ENCODE measurements at regions of chr11 and their contacts with region 1.

Region 1: GRCh38 chr11:81942646-81943045 is 791.0 kb downstream of the FAM181B start:
- DNase-seq: no peak
- ATAC-seq: no peak
- H3K4me3 ChIP-seq: no peak overlapping the region
- H3K4me3 Mint-ChIP-seq: no peak overlapping the region
- H3K27ac ChIP-seq: no peak overlapping the region
- H3K27ac Mint-ChIP-seq: no peak overlapping the region
- H3K4me1 ChIP-seq: no peaks in the 10 kb centered on the region
- H3K4me1 Mint-ChIP-seq: no peaks in the 10 kb centered on the region
- H3K27me3 ChIP-seq: no peaks in the 10 kb centered on the region
- H3K27me3 Mint-ChIP-seq: no peaks in the 10 kb centered on the region

Region 2: DNA sequence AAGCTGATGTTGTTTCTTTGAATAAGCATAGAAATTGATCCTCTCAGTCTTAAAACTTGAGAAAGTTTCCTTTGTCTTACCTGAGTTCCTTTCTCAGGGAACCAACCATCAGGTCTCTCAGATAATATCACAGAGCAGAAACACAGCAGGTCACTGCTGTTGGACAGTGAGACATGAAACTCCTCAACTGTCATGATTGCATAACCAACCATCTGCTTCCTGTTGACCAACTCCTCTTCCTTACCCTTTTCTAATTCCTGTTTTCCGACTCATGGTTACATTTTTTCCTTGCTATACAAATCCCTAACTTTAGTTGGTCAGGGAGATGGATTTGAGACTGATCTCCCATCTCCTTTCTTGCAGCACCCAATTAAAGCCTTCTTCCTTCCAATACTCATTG is 54.3 kb before region 1 on chr11:
- CTCF ChIA-PET with region 1: no interaction called
- POLR2A ChIA-PET with region 1: interaction called in 1 of 2 experiments, 13 read pairs
- DNase-seq: no peak
- ATAC-seq: no peak
- H3K4me3 ChIP-seq: no peak overlapping the region
- H3K4me3 Mint-ChIP-seq: no peak overlapping the region
- H3K27ac ChIP-seq: no peak overlapping the region
- H3K27ac Mint-ChIP-seq: no peak overlapping the region
- H3K4me1 ChIP-seq: no peaks in the 10 kb centered on the region
- H3K4me1 Mint-ChIP-seq: no peaks in the 10 kb centered on the region
- H3K27me3 ChIP-seq: no peaks in the 10 kb centered on the region
- H3K27me3 Mint-ChIP-seq: no peaks in the 10 kb centered on the region

Region 3: DNA sequence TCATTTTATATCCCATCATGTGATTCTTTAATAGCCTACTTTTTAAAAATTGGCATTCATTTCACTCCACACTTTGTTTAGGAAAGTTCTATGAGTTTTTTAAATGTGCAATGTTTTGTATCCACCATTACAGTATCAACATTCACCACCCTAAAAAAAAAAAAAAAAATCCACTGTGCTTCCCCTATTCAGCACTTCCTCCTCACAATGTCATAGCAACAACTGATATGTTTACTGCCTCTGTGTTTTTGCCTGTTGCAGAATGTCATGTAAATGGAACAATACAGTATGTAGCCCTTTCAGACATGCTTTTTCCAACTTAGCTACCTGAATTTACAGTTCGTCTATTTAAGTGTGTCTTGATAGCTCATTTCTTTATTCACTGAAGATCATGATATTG is 36.8 kb after region 1 on chr11:
- CTCF ChIA-PET with region 1: interaction called in 1 of 2 experiments, 12 read pairs
- POLR2A ChIA-PET with region 1: no interaction called
- DNase-seq: no peak
- ATAC-seq: peak in 1 of 4 experiments; percentile 35
- H3K4me3 ChIP-seq: no peak overlapping the region
- H3K4me3 Mint-ChIP-seq: no peak overlapping the region
- H3K27ac ChIP-seq: no peak overlapping the region
- H3K27ac Mint-ChIP-seq: no peak overlapping the region
- H3K4me1 ChIP-seq: no peaks in the 10 kb centered on the region
- H3K4me1 Mint-ChIP-seq: no peaks in the 10 kb centered on the region
- H3K27me3 ChIP-seq: no peaks in the 10 kb centered on the region
- H3K27me3 Mint-ChIP-seq: peaks cover 0 to under 1% of the 10 kb centered on the region in 2 donors